Activated T-helper 2 cell treated with anti-CD3 and anti-CD28 coated beads, Interferon-gamma antibody, Interleukin-2, Interleukin-4, amounts not matched to agents 10 μg/mL and 5 μg/mL and 100 μg/mL, durations not matched to agents 14 hours and 24 hours and 36 hours (primary cell): ENCODE measurements at regions of chr1 and their contacts with region 1.

Region 1: GRCh38 chr1:52404116-52404986 is at the starts of genes ORC1 and PRPF38A:
- DNase-seq: peak; percentile 96
- H3K4me3 Mint-ChIP-seq: peak within 1 kb of the TSS; percentile 98
- H3K27ac Mint-ChIP-seq: peak within 1 kb of the TSS; percentile 97
- H3K4me1 Mint-ChIP-seq: peaks cover 42% of the 10 kb centered on the region
- H3K27me3 Mint-ChIP-seq: no peaks in the 10 kb centered on the region
- total RNA-seq, gene ORC1: 36.2 and 38.9 TPM in 2 replicates
- total RNA-seq, gene PRPF38A: 96.6 and 98.1 TPM in 2 replicates

Region 2: DNA sequence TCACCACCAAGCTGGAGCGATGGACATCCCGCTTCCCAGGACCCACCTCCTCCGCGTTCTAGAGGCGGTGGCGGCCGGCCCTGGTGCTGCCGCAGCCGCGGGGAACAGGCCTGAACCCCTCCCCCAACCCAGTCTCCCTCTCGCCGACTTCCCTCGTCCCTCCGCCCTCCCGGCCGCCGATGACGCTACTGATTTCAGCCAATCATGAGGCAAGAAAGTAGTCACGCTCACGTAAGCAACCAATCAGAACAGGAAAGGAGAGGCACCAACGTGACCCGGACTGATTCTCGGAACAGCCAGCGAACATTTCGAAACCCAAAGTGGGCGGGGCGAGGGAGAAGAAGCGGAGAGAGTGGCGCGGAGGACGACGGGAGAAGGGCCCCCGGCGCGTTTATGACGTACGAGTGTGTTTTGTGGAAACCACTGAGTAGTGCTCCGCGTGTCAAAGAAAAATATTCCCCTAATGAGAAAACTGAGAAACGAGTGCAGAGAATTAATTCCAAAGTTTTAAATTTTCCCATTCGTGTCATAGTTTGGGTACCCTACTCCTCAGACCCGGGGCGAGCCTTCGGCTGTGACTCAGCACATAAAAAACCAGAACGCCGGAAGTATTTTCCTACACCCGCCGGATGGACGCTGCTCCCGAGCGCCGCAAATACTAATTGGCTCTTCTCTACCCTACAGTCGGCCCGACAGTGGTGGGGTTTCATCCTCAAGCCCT is 525.6 kb before region 1 on chr1 and contains the start of gene NRDC:
- intact Hi-C with region 1: loop called (anchors 1 kb)
- DNase-seq: peak; percentile 99
- H3K4me3 Mint-ChIP-seq: no peak within 1 kb of the TSS
- H3K27ac Mint-ChIP-seq: no peak within 1 kb of the TSS
- H3K4me1 Mint-ChIP-seq: peaks cover 32% of the 10 kb centered on the region
- H3K27me3 Mint-ChIP-seq: peaks cover 10% of the 10 kb centered on the region
- total RNA-seq, gene NRDC: 177 and 182 TPM in 2 replicates

Region 3: GRCh38 chr1:52141513-52142219 is 262.7 kb before region 1 on chr1 and contains the start of gene ZFYVE9:
- intact Hi-C with region 1: loop called (anchors 5 kb)
- DNase-seq: peak; percentile 57
- H3K4me3 Mint-ChIP-seq: peak within 1 kb of the TSS; percentile 76
- H3K27ac Mint-ChIP-seq: peak within 1 kb of the TSS; percentile 56
- H3K4me1 Mint-ChIP-seq: peaks cover 27% of the 10 kb centered on the region
- H3K27me3 Mint-ChIP-seq: peaks cover 28% of the 10 kb centered on the region
- total RNA-seq, gene ZFYVE9: 3.7 and 4.0 TPM in 2 replicates

Region 4: GRCh38 chr1:52264530-52265115 is 139.7 kb before region 1 on chr1:
- intact Hi-C with region 1: no loop called
- DNase-seq: no peak
- H3K4me3 Mint-ChIP-seq: no peak overlapping the region
- H3K27ac Mint-ChIP-seq: no peak overlapping the region
- H3K4me1 Mint-ChIP-seq: no peaks in the 10 kb centered on the region
- H3K27me3 Mint-ChIP-seq: no peaks in the 10 kb centered on the region

Region 5: DNA sequence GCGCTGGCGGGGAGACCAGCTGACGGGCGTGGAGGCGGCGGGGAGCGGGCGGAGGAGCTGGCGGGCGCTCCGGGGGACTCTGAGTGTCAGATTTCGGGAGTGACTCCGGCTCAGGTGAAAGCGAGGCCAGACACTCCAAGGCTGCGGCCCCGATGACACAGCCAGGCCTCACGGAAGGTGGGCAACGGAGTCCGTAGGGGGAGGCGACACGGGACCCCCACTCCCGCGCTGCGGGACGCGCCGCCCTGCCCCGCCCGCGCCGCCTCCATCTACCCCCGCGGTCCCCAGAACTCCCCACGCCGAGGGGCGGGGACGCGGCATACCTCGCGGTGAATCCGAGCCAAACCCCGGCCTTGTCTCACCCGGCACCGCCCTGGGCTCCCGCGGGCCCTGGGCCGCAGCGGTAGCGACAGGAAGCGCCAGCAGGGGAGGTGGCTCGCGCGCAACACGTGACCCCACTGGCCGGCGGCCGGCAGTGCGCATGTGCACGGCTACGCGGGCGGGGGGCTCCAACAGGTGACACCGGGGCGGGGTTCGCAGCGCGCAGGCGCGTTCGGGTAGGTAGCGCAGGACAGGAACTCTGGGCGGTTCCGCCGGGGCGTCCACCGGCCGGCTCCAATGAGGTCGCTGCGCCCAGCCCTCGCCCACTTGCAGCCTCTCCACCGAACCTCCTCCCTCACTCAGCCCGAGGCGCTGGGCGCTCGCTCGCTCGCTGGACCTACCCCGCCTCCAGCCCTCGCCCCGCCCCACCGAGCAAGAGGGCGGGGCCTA is 38.4 kb before region 1 on chr1 and contains the start of gene CC2D1B:
- intact Hi-C with region 1: loop called (anchors 2 kb)
- DNase-seq: peak; percentile 100
- H3K4me3 Mint-ChIP-seq: peak within 1 kb of the TSS; percentile 94
- H3K27ac Mint-ChIP-seq: peak within 1 kb of the TSS; percentile 93
- H3K4me1 Mint-ChIP-seq: peaks cover 34% of the 10 kb centered on the region
- H3K27me3 Mint-ChIP-seq: no peaks in the 10 kb centered on the region
- total RNA-seq, gene CC2D1B: 36.0 and 38.1 TPM in 2 replicates

Region 6: DNA sequence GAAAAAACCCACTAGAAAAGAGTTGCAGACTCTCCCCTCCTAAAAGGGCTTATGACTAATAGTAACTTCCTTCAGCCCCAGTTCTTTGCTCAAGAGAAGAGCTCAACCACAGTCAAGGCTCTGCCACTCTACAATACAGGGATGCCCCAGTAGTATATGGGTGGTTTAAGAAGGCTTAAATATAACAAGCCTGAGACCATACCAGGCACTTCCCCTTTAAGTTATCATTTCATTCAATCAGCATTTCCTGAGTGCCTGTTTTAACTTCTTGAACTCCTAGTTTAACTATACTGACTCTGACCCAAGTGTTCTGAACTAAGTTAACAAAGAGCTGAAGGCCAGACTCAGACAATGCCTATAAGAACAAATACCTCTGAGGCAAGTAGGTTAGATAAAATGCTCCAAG is 19.9 kb after region 1 on chr1:
- intact Hi-C with region 1: loop called (anchors 1 kb)
- DNase-seq: peak; percentile 18
- H3K4me3 Mint-ChIP-seq: peak overlapping the region; percentile 54
- H3K27ac Mint-ChIP-seq: peak overlapping the region; percentile 91
- H3K4me1 Mint-ChIP-seq: peaks cover 37% of the 10 kb centered on the region
- H3K27me3 Mint-ChIP-seq: no peaks in the 10 kb centered on the region

Region 7: GRCh38 chr1:52683367-52683940 is 279.1 kb after region 1 on chr1:
- intact Hi-C with region 1: loop called (anchors 1 kb)
- DNase-seq: no peak
- H3K4me3 Mint-ChIP-seq: no peak overlapping the region
- H3K27ac Mint-ChIP-seq: no peak overlapping the region
- H3K4me1 Mint-ChIP-seq: peaks cover 9% of the 10 kb centered on the region
- H3K27me3 Mint-ChIP-seq: no peaks in the 10 kb centered on the region